ENCODE measurements at regions of chr9 and their contacts with region 1.

Region 1: DNA sequence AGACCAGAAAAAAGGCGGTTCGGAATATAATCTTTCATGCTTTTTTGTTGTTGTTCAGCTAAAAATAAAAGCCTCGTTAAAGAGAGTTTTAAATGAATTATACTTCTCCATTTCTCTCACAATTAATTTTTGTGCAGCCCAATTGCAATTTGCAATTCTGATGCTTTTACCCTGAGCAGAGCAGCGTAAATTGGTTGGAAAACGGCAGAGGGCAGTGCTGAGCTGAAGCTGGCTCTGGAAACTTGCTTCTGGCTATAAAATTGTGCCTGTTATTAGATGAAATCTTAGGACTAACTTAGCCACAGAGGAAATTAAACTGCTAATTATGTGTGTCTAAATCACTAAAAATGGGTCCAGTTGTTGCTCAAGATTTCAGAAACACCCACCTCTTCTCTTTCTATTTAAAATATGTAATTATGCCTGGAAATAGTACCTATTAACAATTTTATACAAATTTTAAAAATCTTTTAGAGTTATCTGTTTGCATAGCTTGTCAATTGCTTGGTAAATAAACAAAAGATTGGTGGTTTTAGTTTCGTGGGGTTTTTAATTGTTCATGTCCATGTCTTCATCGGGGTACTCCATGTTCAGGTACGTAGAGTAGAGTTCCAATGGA is 441.8 kb upstream of the TLE4 start:
- DNase-seq: peak; percentile 67
- ATAC-seq: peak; percentile 88
- H3K4me3 ChIP-seq: no peak overlapping the region
- H3K27ac ChIP-seq: no peak overlapping the region
- H3K4me1 ChIP-seq: no peaks in the 10 kb centered on the region; the same call in 1 of the 2 replicates
- H3K27me3 ChIP-seq: no peaks in the 10 kb centered on the region
- CTCF ChIP-seq: peak; percentile 92
- POLR2A ChIP-seq: 0 out of 2 replicates have a peak, but pooled peaks have one; percentile 25
- RAD21 ChIP-seq: peak; percentile 98

Region 2: GRCh38 chr9:78601957-78602565 is 527.9 kb before region 1 on chr9:
- CTCF ChIA-PET with region 1: no interaction called
- POLR2A ChIA-PET with region 1: no interaction called
- dilution Hi-C with region 1: no loop called
- in situ Hi-C with region 1: loop called (anchors 10 kb)
- intact Hi-C with region 1: loop called (anchors 1 kb)
- DNase-seq: peak; percentile 66
- ATAC-seq: peak; percentile 81
- H3K4me3 ChIP-seq: no peak overlapping the region
- H3K27ac ChIP-seq: no peak overlapping the region
- H3K4me1 ChIP-seq: peaks cover 6% of the 10 kb centered on the region
- H3K27me3 ChIP-seq: no peaks in the 10 kb centered on the region
- CTCF ChIP-seq: peak; percentile 79
- POLR2A ChIP-seq: no peak
- RAD21 ChIP-seq: peak; percentile 86

Region 3: GRCh38 chr9:79046401-79046800 is 83.6 kb before region 1 on chr9:
- CTCF ChIA-PET with region 1: no interaction called
- POLR2A ChIA-PET with region 1: no interaction called
- dilution Hi-C with region 1: no loop called
- in situ Hi-C with region 1: no loop called
- intact Hi-C with region 1: no loop called
- DNase-seq: peak; percentile 34
- ATAC-seq: no peak
- H3K4me3 ChIP-seq: no peak overlapping the region
- H3K27ac ChIP-seq: no peak overlapping the region
- H3K4me1 ChIP-seq: no peaks in the 10 kb centered on the region
- H3K27me3 ChIP-seq: no peaks in the 10 kb centered on the region
- CTCF ChIP-seq: no peak
- POLR2A ChIP-seq: no peak
- RAD21 ChIP-seq: no peak

Region 4: DNA sequence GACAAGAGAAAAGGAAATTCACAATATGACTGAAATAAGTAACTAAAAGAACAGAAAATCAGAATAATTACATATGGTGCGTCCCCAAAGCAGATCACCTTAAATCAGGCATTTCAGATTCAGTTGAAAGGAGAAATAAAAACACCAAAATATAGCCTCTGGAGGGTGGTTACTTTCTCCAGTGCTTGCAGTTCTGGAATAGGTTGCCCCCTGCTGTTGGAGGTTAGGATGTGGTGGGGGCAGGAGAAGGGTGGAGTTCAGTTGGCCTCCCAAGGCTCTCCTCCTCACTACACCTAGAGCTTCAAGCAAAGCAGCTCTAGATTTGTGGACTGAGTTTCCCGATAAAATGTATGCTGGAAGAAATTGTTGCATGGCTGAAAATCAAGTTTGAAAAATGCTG is 103.6 kb after region 1 on chr9:
- CTCF ChIA-PET with region 1: interaction called, 3 read pairs
- POLR2A ChIA-PET with region 1: no interaction called
- dilution Hi-C with region 1: no loop called
- in situ Hi-C with region 1: no loop called
- intact Hi-C with region 1: loop called (anchors 1 kb)
- DNase-seq: peak; percentile 27
- ATAC-seq: no peak
- H3K4me3 ChIP-seq: no peak overlapping the region
- H3K27ac ChIP-seq: no peak overlapping the region
- H3K4me1 ChIP-seq: no peaks in the 10 kb centered on the region
- H3K27me3 ChIP-seq: no peaks in the 10 kb centered on the region
- CTCF ChIP-seq: peak; percentile 47
- POLR2A ChIP-seq: no peak
- RAD21 ChIP-seq: peak; percentile 38

Region 5: GRCh38 chr9:79501566-79501965 is 371.6 kb after region 1 on chr9:
- CTCF ChIA-PET with region 1: no interaction called
- POLR2A ChIA-PET with region 1: no interaction called
- dilution Hi-C with region 1: no loop called
- in situ Hi-C with region 1: no loop called
- intact Hi-C with region 1: no loop called
- DNase-seq: no peak
- ATAC-seq: no peak
- H3K4me3 ChIP-seq: no peak overlapping the region
- H3K27ac ChIP-seq: no peak overlapping the region
- H3K4me1 ChIP-seq: no peaks in the 10 kb centered on the region
- H3K27me3 ChIP-seq: no peaks in the 10 kb centered on the region
- CTCF ChIP-seq: no peak
- POLR2A ChIP-seq: no peak
- RAD21 ChIP-seq: no peak

Region 6: GRCh38 chr9:79694676-79695400 is 564.9 kb after region 1 on chr9:
- CTCF ChIA-PET with region 1: no interaction called
- POLR2A ChIA-PET with region 1: no interaction called
- dilution Hi-C with region 1: no loop called
- in situ Hi-C with region 1: no loop called
- intact Hi-C with region 1: loop called (anchors 10 kb)
- DNase-seq: peak; percentile 92
- ATAC-seq: peak; percentile 88
- H3K4me3 ChIP-seq: no peak overlapping the region
- H3K27ac ChIP-seq: no peak overlapping the region
- H3K4me1 ChIP-seq: peaks cover 6% of the 10 kb centered on the region
- H3K27me3 ChIP-seq: no peaks in the 10 kb centered on the region
- CTCF ChIP-seq: no peak
- POLR2A ChIP-seq: no peak
- RAD21 ChIP-seq: no peak

Region 7: GRCh38 chr9:80175286-80176150 is 1045.5 kb after region 1 on chr9:
- CTCF ChIA-PET with region 1: no interaction called
- POLR2A ChIA-PET with region 1: no interaction called
- dilution Hi-C with region 1: no loop called
- in situ Hi-C with region 1: no loop called
- intact Hi-C with region 1: loop called (anchors 10 kb)
- DNase-seq: peak; percentile 64
- ATAC-seq: peak; percentile 66
- H3K4me3 ChIP-seq: no peak overlapping the region
- H3K27ac ChIP-seq: no peak overlapping the region
- H3K4me1 ChIP-seq: no peaks in the 10 kb centered on the region
- H3K27me3 ChIP-seq: no peaks in the 10 kb centered on the region
- CTCF ChIP-seq: peak; percentile 75
- POLR2A ChIP-seq: no peak
- RAD21 ChIP-seq: peak; percentile 78

Measured in IMR-90 (cell line).